Activated naive CD4-positive, alpha-beta T cell treated with anti-CD3 and anti-CD28 coated beads, Interleukin-2, amount 10 ng/mL, durations not matched to agents 7 days and 5 days (primary cell): ENCODE measurements at regions of chr12 and their contacts with region 1.

Region 1: DNA sequence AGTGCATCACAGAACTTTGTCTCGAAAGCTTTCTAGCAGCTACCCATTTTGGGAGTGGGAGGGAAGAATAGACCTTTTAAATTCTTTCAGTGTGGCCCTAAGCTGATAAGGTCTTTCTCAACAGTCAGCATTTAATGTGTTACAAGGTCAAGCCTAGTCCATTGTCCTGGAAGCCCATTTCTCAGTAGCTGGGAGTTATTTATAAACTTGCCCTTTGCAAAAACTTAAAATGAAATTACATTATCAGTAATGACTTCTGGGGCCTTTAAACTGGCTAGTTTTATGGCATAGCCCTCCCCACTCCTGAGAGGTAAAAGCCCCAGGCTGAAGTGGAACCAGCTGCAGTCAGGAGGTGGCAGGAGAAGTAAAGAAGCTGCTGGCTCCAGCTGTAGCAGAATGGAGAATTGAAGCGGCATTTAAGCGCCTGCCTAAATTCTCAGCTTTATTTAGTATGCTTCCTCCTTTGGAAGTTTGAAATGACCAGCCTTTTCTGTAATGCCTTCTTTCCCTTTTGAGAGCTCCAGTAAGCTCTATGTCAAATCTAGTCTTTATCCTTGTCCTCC is 12.4 kb downstream of the COPZ1 start:
- DNase-seq: no peak
- H3K4me3 Mint-ChIP-seq: no peak overlapping the region
- H3K27ac Mint-ChIP-seq: no peak overlapping the region
- H3K4me1 Mint-ChIP-seq: peaks cover 10% of the 10 kb centered on the region
- H3K27me3 Mint-ChIP-seq: no peaks in the 10 kb centered on the region

Region 2: GRCh38 chr12:54324617-54325441 is 12.5 kb before region 1 on chr12 and contains the start of gene COPZ1:
- CTCF ChIA-PET with region 1: interaction called, 20 read pairs
- DNase-seq: peak; percentile 97
- H3K4me3 Mint-ChIP-seq: peak within 1 kb of the TSS; percentile 88
- H3K27ac Mint-ChIP-seq: peak within 1 kb of the TSS; percentile 86
- H3K4me1 Mint-ChIP-seq: peaks cover 43% of the 10 kb centered on the region
- H3K27me3 Mint-ChIP-seq: peaks cover 4% of the 10 kb centered on the region

Region 3: DNA sequence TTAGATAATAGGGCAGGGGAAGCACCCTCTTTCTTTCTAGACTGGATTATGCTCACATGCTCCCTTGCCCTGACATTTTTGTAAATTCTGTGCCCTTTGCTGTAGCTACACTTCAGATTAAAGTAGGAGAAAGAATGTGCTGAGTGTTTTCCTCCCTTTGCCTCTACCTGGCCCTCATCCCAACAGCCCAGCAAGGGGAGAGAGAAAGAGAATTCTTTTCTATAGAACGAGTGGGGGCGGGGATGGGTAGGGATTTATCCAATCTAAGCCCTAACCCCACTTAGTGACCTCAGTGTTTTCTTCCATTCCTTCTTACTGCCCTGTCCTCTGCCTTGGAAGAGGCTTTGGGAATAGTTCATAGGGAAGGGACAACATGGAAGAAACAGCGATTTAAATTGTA is 13.4 kb after region 1 on chr12:
- CTCF ChIA-PET with region 1: interaction called, 10 read pairs
- DNase-seq: no peak
- H3K4me3 Mint-ChIP-seq: no peak overlapping the region
- H3K27ac Mint-ChIP-seq: no peak overlapping the region
- H3K4me1 Mint-ChIP-seq: peaks cover 19% of the 10 kb centered on the region
- H3K27me3 Mint-ChIP-seq: no peaks in the 10 kb centered on the region

Region 4: DNA sequence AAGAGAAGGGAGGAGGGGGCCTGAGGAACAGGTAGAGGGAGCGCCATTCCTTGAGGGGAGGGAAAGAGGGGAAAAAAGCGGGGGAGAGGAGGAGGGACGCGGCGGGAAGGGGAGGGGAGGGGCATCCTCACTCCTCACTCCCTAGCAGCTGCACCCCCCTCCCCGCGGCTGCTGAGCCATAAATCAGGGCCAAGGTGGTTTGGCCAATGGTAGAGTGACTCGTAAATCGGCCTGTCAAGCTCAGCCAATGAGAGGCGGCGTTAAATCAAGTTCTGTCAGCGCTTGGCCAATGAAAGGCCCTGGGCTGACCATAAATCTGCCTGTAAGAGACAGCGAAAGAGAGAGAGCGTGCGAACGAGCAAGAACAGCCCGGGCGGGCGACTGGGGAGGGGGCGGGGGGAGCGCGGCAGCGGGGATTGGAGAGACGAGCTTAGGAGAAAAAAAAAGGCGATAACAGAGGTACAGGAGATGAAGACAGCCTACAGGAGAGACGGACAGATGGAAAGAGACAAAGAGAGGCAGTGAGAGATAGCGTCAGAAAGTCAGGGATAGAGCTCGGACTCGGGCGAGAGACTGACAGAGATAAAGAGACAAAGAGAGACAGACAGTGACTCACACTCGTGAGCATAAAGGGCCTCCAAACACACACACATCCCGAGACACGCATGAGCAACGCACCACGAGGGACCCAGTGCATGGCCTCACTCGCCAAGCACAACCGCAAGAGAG is 21.8 kb after region 1 on chr12:
- CTCF ChIA-PET with region 1: interaction called, 89 read pairs
- DNase-seq: peak; percentile 97
- H3K4me3 Mint-ChIP-seq: no peak overlapping the region
- H3K27ac Mint-ChIP-seq: no peak overlapping the region
- H3K4me1 Mint-ChIP-seq: peaks cover 32% of the 10 kb centered on the region
- H3K27me3 Mint-ChIP-seq: peaks cover 6% of the 10 kb centered on the region

Region 5: GRCh38 chr12:54368709-54369583 is 31.6 kb after region 1 on chr12:
- CTCF ChIA-PET with region 1: interaction called, 89 read pairs
- DNase-seq: peak; percentile 93
- H3K4me3 Mint-ChIP-seq: peak overlapping the region; percentile 33
- H3K27ac Mint-ChIP-seq: no peak overlapping the region
- H3K4me1 Mint-ChIP-seq: peaks cover 41% of the 10 kb centered on the region
- H3K27me3 Mint-ChIP-seq: peaks cover 33% of the 10 kb centered on the region

Region 6: GRCh38 chr12:54379401-54380201 is 42.2 kb after region 1 on chr12:
- CTCF ChIA-PET with region 1: interaction called, 43 read pairs
- DNase-seq: peak; percentile 94
- H3K4me3 Mint-ChIP-seq: peak overlapping the region; percentile 41
- H3K27ac Mint-ChIP-seq: no peak overlapping the region
- H3K4me1 Mint-ChIP-seq: peaks cover 9% of the 10 kb centered on the region
- H3K27me3 Mint-ChIP-seq: peaks cover 48% of the 10 kb centered on the region